T-cell (primary cell): ENCODE measurements at regions of chr11 and their contacts with region 1.

Region 1: DNA sequence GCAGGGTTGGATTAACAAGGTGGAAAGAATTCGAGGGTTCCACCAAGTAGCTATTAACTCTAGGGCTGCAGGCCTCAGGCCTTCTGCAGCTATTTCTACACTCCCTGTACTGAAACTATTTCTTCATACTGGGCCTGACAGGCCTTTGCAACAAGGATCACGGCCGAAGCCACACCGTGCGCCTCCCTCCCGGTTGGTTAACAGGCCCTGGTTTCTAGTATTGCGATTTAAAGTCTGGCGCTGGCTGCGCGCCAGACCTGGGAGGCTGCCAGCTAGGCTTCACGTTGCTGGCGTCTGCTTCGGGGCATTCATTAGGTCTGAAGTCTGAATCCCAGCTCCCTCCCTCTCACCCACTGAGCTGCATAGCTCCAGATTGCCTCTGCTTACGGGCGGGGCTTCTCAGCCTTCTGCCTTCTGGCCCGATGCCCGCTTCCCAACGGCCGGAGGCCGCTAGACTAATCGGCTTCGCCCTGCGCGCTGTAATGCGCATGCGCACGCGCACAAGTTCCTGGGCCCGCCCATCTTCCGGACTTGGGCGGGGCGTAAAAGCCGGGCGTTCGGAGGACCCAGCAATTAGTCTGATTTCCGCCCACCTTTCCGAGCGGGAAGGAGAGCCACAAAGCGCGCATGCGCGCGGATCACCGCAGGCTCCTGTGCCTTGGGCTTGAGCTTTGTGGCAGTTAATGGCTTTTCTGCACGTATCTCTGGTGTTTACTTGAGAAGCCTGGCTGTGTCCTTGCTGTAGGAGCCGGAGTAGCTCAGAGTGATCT is 1.6 kb downstream of the LDHA start:
- DNase-seq: peak; percentile 83 to 97 (median 90)
- ATAC-seq: peak; percentile 67 to 75 (median 72)
- H3K4me3 ChIP-seq: peak overlapping the region; percentile 85 to 97
- H3K4me3 Mint-ChIP-seq: peak overlapping the region; percentile 97 to 99 (median 98)
- H3K27ac ChIP-seq: peak overlapping the region; percentile 80
- H3K27ac Mint-ChIP-seq: peak overlapping the region; percentile 95
- H3K4me1 ChIP-seq: peaks cover 7 to 40% of the 10 kb centered on the region in 2 experiments
- H3K4me1 Mint-ChIP-seq: peaks cover 35 to 55% (median 35%) of the 10 kb centered on the region in 3 donors
- H3K27me3 ChIP-seq: no peaks in the 10 kb centered on the region
- H3K27me3 Mint-ChIP-seq: no peaks in the 10 kb centered on the region

Region 2: GRCh38 chr11:18321980-18322711 is 73.8 kb before region 1 on chr11 and contains the starts of genes GTF2H1 and HPS5:
- CTCF ChIA-PET with region 1: interaction called in 1 of 2 experiments, 5 read pairs
- POLR2A ChIA-PET with region 1: interaction called, 20 to 53 read pairs
- DNase-seq: peak; percentile 92 to 99 (median 96)
- ATAC-seq: peak; percentile 89 to 91 (median 90)
- H3K4me3 ChIP-seq: peak within 1 kb of the TSS; percentile 77 to 93
- H3K4me3 Mint-ChIP-seq: peak within 1 kb of the TSS; percentile 97 to 99 (median 98)
- H3K27ac ChIP-seq: peak within 1 kb of the TSS; percentile 98
- H3K27ac Mint-ChIP-seq: peak within 1 kb of the TSS; percentile 100
- H3K4me1 ChIP-seq: peaks cover 21 to 32% of the 10 kb centered on the region in 2 experiments
- H3K4me1 Mint-ChIP-seq: peaks cover 77 to 82% (median 79%) of the 10 kb centered on the region in 3 donors
- H3K27me3 ChIP-seq: no peaks in the 10 kb centered on the region
- H3K27me3 Mint-ChIP-seq: no peaks in the 10 kb centered on the region
- total RNA-seq, gene GTF2H1: 25.9 to 44.8 (median 37.5) TPM
- total RNA-seq, gene HPS5: 12.9 to 17.9 (median 14.3) TPM

Region 3: DNA sequence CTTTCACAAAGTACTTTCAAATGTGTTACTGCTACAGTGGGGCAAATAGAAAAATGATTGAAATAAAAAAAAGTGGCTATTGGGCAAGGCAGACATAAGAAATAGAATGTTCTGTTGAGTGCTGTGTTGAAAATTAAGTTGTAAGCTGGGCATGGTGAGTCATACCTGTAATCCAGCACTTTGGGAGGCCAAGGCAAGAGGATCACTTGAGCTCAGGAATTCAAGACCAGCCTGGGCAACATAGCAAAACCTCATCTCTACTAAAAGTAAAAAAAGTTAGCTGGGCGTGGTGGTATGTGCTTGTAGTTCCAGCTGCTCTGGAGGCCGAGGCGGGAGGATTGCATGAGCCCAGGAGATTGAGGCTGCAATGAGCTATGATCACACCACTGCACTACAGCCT is 28.5 kb before region 1 on chr11:
- CTCF ChIA-PET with region 1: interaction called, 4 to 11 read pairs
- POLR2A ChIA-PET with region 1: interaction called in 1 of 2 experiments, 4 read pairs
- DNase-seq: no peak
- ATAC-seq: no peak
- H3K4me3 ChIP-seq: no peak overlapping the region
- H3K4me3 Mint-ChIP-seq: no peak overlapping the region
- H3K27ac ChIP-seq: no peak overlapping the region
- H3K27ac Mint-ChIP-seq: peak overlapping the region in 1 of 2 donors; percentile 51
- H3K4me1 ChIP-seq: peaks cover 0 to 2% of the 10 kb centered on the region in 2 experiments
- H3K4me1 Mint-ChIP-seq: peaks cover 2 to 20% (median 5%) of the 10 kb centered on the region in 3 donors
- H3K27me3 ChIP-seq: no peaks in the 10 kb centered on the region
- H3K27me3 Mint-ChIP-seq: no peaks in the 10 kb centered on the region

Region 4: DNA sequence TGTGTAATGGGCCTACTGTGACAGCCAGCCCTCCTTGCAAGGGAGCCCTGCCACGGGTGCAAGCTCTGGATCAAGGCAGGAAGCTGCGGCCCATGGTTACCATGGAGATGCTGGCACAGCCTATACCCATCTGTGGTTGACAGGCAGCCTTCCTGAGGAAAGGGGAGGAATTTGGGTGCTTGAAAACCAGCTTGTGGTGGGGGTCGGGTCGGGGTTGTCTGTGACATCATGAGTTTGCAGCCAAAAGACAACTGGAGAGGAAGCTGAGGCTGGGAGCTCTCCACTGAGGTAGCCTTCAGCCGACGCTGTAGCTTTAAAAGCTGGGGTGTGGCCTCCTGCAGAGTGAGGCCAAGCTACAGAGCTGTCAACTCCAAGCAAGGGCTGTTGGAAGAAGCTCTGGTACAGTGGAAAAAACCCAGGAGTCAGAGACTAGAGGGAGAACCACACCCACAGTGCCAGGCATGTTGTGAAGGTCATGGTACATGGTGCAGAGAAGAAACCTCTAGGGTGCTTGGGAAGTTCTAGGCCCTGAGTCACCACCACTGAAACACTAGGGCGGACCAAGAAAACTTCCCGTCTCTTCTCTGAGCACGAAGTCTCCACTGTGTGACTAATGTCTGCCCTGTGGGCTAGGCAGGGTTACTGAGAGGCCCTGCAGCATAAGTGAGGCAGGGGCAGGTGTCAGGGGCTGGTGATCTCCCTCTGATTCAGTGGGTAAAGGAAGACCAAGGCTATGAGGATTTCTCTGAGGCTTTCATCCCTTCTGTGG is 12.3 kb before region 1 on chr11:
- CTCF ChIA-PET with region 1: interaction called in 1 of 2 experiments, 28 read pairs
- POLR2A ChIA-PET with region 1: interaction called, 24 to 52 read pairs
- DNase-seq: peak; percentile 14 to 80 (median 60)
- ATAC-seq: peak; percentile 86 to 94 (median 89)
- H3K4me3 ChIP-seq: peak overlapping the region; percentile 16 to 33
- H3K4me3 Mint-ChIP-seq: peak overlapping the region in 2 of 3 donors; percentile 64 to 84
- H3K27ac ChIP-seq: peak overlapping the region; percentile 90
- H3K27ac Mint-ChIP-seq: peak overlapping the region; percentile 97 to 100
- H3K4me1 ChIP-seq: peaks cover 19 to 51% of the 10 kb centered on the region in 2 experiments
- H3K4me1 Mint-ChIP-seq: peaks cover 25 to 52% (median 45%) of the 10 kb centered on the region in 3 donors
- H3K27me3 ChIP-seq: no peaks in the 10 kb centered on the region
- H3K27me3 Mint-ChIP-seq: no peaks in the 10 kb centered on the region

Region 5: GRCh38 chr11:18408558-18409242 is 12.8 kb after region 1 on chr11:
- CTCF ChIA-PET with region 1: interaction called in 1 of 2 experiments, 4 read pairs
- POLR2A ChIA-PET with region 1: interaction called, 7 to 13 read pairs
- DNase-seq: no peak
- ATAC-seq: no peak
- H3K4me3 ChIP-seq: no peak overlapping the region
- H3K4me3 Mint-ChIP-seq: no peak overlapping the region
- H3K27ac ChIP-seq: no peak overlapping the region
- H3K27ac Mint-ChIP-seq: no peak overlapping the region
- H3K4me1 ChIP-seq: peaks cover 0 to 4% of the 10 kb centered on the region in 2 experiments
- H3K4me1 Mint-ChIP-seq: peaks cover 7 to 15% (median 7%) of the 10 kb centered on the region in 3 donors
- H3K27me3 ChIP-seq: no peaks in the 10 kb centered on the region
- H3K27me3 Mint-ChIP-seq: no peaks in the 10 kb centered on the region

Region 6: GRCh38 chr11:18608376-18608775 is 212.5 kb after region 1 on chr11:
- CTCF ChIA-PET with region 1: no interaction called
- POLR2A ChIA-PET with region 1: no interaction called
- DNase-seq: no peak
- ATAC-seq: no peak
- H3K4me3 ChIP-seq: no peak overlapping the region
- H3K4me3 Mint-ChIP-seq: no peak overlapping the region
- H3K27ac ChIP-seq: no peak overlapping the region
- H3K27ac Mint-ChIP-seq: no peak overlapping the region
- H3K4me1 ChIP-seq: no peaks in the 10 kb centered on the region
- H3K4me1 Mint-ChIP-seq: peaks cover 0 to 2% (median 0%) of the 10 kb centered on the region in 3 donors
- H3K27me3 ChIP-seq: no peaks in the 10 kb centered on the region
- H3K27me3 Mint-ChIP-seq: no peaks in the 10 kb centered on the region